ENCODE measurements at regions of chrX and their contacts with region 1.

Region 1: GRCh38 chrX:101744085-101744484 is 84.4 kb upstream of the ARMCX2 start:
- DNase-seq: peak; percentile 62
- H3K4me3 ChIP-seq: no peak overlapping the region
- H3K27ac ChIP-seq: no peak overlapping the region
- H3K4me1 ChIP-seq: no peaks in the 10 kb centered on the region
- H3K27me3 ChIP-seq: no peaks in the 10 kb centered on the region
- CTCF ChIP-seq: no peak

Region 2: GRCh38 chrX:101617211-101618191 is 126.6 kb before region 1 on chrX and contains the start of gene ARMCX6:
- CTCF ChIA-PET with region 1: no interaction called
- POLR2A ChIA-PET with region 1: no interaction called
- intact Hi-C with region 1: loop called (anchors 5 kb)
- DNase-seq: peak; percentile 79
- H3K4me3 ChIP-seq: peak within 1 kb of the TSS; percentile 71
- H3K27ac ChIP-seq: peak within 1 kb of the TSS; percentile 70
- H3K4me1 ChIP-seq: peaks cover 12% of the 10 kb centered on the region
- H3K27me3 ChIP-seq: no peaks in the 10 kb centered on the region
- CTCF ChIP-seq: peak; percentile 47; the same call in 1 of the 2 replicates
- total RNA-seq, gene ARMCX6: 39.9 and 44.7 TPM in 2 replicates

Measured in A673 (cell line).